AG04449 (cell line): ENCODE measurements at regions of chr10 and their contacts with region 1.

Region 1: GRCh38 chr10:44864637-44865288 is 46.4 kb upstream of the TMEM72 start:
- DNase-seq: no peak
- H3K4me3 ChIP-seq: peak overlapping the region; percentile 69
- CTCF ChIP-seq: peak; percentile 95

Region 2: DNA sequence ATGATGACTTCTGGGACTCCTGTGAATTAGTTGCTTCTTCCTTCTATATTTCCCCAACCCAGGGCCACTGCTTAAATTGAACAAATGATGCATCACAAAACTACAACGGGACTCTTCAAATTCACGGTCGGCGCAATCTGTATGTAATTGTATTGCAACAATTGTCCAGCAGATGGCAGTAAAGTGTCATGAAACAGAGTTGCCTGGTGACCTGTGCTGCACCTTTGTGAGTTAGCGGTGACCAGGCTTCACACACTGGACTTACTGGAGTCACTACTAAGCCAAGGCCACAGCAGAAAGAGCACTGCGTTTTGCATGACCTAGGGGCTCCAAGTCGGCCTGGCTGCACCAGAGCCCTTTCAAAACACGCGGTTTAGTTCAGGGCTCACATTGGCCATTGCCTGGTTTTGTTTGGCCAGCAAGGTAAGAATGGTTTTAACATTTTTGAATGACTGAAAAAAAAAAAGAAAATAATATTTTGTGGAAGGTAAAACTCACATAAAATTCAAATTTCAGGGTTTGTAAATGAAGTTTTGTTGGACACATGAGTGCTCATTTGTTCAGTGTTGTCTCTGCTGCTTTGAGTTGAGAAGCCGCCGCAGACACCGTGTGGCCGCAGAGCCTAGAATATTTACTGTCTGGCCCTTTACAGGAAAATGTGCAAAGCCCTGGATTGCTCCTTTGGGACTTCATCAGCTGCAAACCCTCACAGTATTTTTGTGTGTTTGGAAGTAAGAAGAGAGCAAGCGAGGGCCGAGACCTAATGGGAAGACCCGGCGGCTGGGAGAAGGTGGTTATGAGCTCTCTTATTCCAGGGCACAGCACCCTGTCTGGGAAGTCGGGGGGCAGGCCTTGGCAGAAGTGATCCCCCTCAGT is 1192.9 kb before region 1 on chr10:
- CTCF ChIA-PET with region 1: interaction called, 25 read pairs
- POLR2A ChIA-PET with region 1: no interaction called
- DNase-seq: no peak
- H3K4me3 ChIP-seq: no peak overlapping the region
- CTCF ChIP-seq: peak; percentile 56

Region 3: DNA sequence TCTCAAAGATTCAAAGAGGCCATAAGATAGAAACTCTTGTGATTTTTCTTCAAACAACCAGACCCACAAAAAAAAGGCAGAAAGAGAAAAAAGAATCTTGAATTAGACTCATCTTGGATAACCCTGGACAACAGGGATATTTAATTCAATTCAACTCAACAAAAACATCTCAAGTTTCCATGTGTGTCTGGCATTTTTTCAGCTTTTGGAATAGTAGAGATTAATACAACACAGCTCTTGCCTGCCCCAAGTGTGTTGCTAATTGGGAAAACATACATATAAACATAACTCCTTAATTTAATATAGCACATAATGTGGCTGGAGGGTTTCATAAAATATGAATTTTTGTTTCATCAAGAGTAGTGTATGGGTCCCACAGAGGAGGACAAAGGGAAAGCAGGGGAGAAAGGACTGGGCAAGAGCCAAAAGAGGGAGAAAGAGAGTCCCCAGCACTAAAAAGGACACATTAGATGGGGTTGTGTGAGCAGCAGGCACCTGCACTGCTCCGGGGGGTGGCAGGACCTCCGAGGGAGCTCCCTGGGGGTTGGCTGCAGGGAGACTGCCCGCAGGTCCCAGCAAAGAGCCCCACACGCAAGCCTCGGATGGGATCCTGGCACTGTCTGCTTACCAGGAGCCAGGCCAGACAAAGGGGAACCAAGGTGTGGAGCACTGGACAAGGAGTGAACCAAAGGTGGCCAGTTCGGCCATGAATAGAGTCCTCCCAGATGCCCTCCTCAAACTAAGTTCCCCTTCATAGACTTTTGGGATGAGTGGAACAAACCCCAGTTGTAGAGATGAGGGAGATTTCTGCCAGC is 19.2 kb before region 1 on chr10:
- CTCF ChIA-PET with region 1: interaction called, 44 read pairs
- POLR2A ChIA-PET with region 1: no interaction called
- DNase-seq: no peak
- H3K4me3 ChIP-seq: no peak overlapping the region
- CTCF ChIP-seq: no peak

Region 4: GRCh38 chr10:44878706-44879530 is 14.2 kb after region 1 on chr10:
- CTCF ChIA-PET with region 1: interaction called, 38 read pairs
- POLR2A ChIA-PET with region 1: no interaction called
- DNase-seq: no peak
- H3K4me3 ChIP-seq: peak overlapping the region; percentile 59
- CTCF ChIP-seq: no peak